ENCODE measurements at regions of chr22 and their contacts with region 1.

Region 1: DNA sequence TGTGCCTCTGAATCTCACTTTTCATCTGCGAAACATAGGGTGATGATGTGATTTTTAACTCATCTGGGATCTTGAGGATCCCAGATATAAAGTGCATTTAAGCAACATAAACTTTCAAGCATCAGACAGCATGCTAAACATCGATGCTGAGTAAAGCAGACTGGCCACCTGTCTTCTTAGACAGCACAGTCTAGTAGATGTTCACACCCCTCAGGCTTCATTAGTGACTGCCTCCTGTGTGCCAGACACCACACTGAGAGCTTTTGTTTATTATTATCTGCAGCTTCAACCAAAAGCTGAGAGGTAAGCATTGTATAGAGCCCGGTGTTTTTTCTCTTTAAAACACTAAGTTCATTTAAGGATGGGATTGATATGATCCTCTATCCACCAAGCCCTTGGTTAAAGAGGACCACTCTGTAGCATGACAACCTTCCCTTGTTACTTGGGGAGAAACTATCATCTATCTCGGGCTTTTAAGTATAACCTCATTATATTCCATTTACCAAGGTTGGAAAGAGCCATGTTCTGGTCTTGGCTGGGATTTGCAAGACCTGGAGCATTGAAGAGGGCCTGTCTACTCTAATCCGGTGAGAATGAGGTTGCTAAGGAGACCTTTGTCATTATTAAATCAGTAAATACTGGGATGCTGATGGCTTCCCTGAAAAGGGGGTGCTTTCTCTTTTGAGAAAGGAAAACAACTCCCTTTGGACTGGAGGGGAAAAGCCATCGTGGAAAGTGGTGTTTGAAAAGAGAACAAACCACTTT is 114.2 kb upstream of the SEZ6L start:
- DNase-seq: no peak
- H3K4me3 ChIP-seq: no peak overlapping the region
- H3K27ac ChIP-seq: no peak overlapping the region
- H3K4me1 ChIP-seq: no peaks in the 10 kb centered on the region
- H3K27me3 ChIP-seq: no peaks in the 10 kb centered on the region
- CTCF ChIP-seq: no peak

Region 2: GRCh38 chr22:25966448-25966913 is 88.5 kb before region 1 on chr22:
- CTCF ChIA-PET with region 1: no interaction called
- dilution Hi-C with region 1: loop called (anchors 5 kb)
- in situ Hi-C with region 1: no loop called
- intact Hi-C with region 1: no loop called
- DNase-seq: no peak
- H3K4me3 ChIP-seq: no peak overlapping the region
- H3K27ac ChIP-seq: no peak overlapping the region
- H3K4me1 ChIP-seq: no peaks in the 10 kb centered on the region
- H3K27me3 ChIP-seq: no peaks in the 10 kb centered on the region
- CTCF ChIP-seq: no peak

Measured in mammary epithelial cell (primary cell).